GM10248 (cell line): ENCODE measurements at regions of chr16 and their contacts with region 1.

Region 1: GRCh38 chr16:96935-97381 is 18.9 kb downstream of the MPG start:
- DNase-seq: peak; percentile 98
- CTCF ChIP-seq: peak; percentile 100

Region 2: DNA sequence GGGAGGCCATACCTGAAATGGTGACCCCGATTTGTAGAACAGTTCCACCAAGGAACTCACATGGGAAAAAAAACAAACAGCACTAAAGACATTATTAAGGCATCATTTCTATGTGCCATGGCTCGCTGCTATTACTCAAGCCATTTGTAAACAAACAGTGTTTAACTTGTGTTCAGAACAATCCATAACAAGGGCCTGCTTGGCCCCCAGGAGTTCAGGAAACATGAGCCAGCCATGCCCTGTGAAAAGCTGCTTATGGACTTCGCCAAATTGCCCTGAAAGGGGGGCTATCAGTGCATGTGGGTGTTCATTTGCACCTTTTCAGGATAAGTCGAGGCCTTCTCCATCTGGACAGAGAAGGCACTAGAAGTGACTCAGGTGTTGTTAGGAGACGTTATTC is 51.5 kb before region 1 on chr16:
- CTCF ChIA-PET with region 1: interaction called, 11 read pairs
- POLR2A ChIA-PET with region 1: no interaction called
- DNase-seq: no peak
- CTCF ChIP-seq: no peak

Region 3: DNA sequence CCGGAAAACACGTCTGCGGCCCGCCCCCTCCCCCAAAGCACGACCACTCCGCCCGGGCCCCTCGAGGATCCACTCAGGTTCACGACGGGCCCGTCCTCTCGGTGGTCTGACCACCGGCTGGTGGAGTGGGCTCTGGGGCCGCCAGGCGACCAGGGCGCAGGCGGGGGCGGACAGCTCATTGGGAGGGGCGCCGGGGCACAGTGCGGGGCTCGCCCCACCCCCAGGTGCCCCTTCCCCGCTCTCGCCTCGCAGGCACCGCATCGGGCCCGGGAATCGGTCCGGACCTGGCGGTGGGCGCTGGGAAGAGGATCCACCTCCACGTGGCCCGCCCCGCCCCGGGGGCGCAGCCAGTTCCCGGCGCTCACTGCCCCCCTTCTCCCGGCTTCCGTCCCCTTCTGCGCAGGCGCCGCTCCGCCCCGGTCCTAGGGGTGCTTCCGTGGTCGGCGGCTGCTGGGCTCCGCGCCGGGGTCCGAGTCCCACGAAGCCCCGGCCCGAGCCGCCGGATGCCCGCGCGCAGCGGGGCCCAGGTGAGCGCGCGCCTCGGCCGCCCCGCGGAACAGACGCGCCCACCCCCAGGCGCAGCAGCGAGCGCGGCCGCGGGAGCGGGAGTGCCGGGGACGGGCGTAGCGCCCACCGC is 19.0 kb before region 1 on chr16 and contains the start of gene MPG:
- CTCF ChIA-PET with region 1: interaction called, 701 read pairs
- POLR2A ChIA-PET with region 1: interaction called, 7 read pairs
- DNase-seq: peak; percentile 98
- CTCF ChIP-seq: no peak

Region 4: GRCh38 chr16:112153-112840 is 15.3 kb after region 1 on chr16:
- CTCF ChIA-PET with region 1: no interaction called
- POLR2A ChIA-PET with region 1: no interaction called
- DNase-seq: no peak
- CTCF ChIP-seq: no peak

Region 5: GRCh38 chr16:133716-134115 is 36.8 kb after region 1 on chr16:
- CTCF ChIA-PET with region 1: interaction called, 15 read pairs
- POLR2A ChIA-PET with region 1: no interaction called
- DNase-seq: no peak
- CTCF ChIP-seq: no peak

Region 6: DNA sequence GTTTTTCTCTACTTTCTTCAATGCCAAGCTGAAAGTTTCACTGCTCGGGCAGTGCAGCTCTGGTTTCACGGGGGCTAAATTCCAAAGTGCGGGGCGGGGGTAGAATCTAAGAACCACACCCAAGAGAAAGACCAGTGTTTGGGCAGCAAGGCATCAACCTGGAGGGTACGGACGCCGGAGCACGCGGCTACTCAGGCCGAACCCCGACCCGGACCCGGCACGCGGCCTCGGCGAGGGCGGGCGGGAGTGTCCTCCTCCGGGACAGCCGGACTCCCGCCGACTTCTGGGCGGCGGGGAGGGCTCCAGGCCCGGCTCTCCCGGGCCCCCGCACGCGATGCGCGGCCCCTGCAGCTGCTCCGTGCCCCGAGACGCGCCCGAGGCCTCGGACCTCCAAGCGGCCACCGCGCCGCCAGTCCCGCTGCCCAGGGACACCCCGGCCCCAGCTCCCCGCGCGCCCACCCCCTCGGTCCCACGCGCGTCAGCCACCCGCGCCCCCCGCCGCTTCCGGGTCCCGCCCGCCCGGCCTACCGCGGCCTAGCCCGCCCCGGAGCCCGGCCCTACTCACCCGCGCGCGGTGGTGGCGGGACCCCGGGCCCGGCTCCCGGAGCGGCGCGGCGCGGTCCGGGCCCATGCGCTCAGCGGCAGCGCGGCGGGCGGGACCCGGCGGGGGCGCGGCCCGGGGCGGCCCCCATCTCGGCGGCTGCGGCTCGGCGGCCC is 255.0 kb after region 1 on chr16:
- CTCF ChIA-PET with region 1: interaction called, 18 read pairs
- POLR2A ChIA-PET with region 1: no interaction called
- DNase-seq: no peak
- CTCF ChIP-seq: no peak